ENCODE measurements at regions of chr20 and their contacts with region 1.

Region 1: GRCh38 chr20:3218307-3218988 is 9.2 kb downstream of the ITPA start:
- DNase-seq: peak; percentile 74
- ATAC-seq: peak; percentile 20
- H3K4me3 ChIP-seq: no peak overlapping the region
- H3K27ac ChIP-seq: no peak overlapping the region
- H3K4me1 ChIP-seq: peaks cover 29% of the 10 kb centered on the region
- H3K27me3 ChIP-seq: no peaks in the 10 kb centered on the region
- CTCF ChIP-seq: peak; percentile 99

Region 2: DNA sequence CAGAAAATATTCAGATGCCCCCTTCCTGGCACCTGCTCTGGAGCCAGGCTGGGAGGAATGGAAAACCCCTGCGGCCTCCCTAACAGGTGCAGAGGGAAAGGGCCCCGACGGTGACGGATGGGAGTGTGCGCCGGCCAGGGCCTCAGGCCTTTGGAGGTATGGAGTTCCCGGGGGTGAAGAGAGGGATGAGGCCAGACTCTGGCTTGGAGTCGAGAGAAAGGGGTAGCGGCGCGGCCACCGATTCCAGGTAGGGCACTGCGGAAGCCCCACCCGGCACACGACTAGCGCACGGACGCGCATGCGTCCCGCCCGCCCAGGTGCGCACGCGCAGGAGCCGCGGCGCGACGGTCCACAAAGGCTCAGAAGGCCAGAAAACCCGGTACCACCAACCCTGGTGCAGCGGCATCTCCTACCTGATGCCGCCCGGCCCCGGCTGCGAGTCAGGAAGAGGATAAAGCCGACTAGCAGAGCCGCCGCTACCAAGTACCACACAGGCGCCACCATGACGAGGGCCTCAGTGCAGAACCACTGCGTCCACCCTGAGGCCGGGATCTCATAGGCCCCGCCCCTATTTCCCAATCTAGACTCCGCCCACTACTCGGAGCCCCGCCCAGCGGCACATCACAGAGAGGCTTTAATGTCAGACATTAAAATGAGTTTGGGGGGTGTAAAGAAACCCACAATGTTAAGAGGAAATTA is 14.2 kb before region 1 on chr20 and contains the start of gene DDRGK1:
- CTCF ChIA-PET with region 1: interaction called, 4 read pairs
- POLR2A ChIA-PET with region 1: interaction called, 12 read pairs
- intact Hi-C with region 1: no loop called
- DNase-seq: peak; percentile 91
- ATAC-seq: peak; percentile 82
- H3K4me3 ChIP-seq: peak within 1 kb of the TSS; percentile 84
- H3K27ac ChIP-seq: peak within 1 kb of the TSS; percentile 60
- H3K4me1 ChIP-seq: peaks cover 14% of the 10 kb centered on the region
- H3K27me3 ChIP-seq: no peaks in the 10 kb centered on the region
- CTCF ChIP-seq: no peak
- total RNA-seq, gene DDRGK1: 97.7 and 122 TPM in 2 replicates

Region 3: DNA sequence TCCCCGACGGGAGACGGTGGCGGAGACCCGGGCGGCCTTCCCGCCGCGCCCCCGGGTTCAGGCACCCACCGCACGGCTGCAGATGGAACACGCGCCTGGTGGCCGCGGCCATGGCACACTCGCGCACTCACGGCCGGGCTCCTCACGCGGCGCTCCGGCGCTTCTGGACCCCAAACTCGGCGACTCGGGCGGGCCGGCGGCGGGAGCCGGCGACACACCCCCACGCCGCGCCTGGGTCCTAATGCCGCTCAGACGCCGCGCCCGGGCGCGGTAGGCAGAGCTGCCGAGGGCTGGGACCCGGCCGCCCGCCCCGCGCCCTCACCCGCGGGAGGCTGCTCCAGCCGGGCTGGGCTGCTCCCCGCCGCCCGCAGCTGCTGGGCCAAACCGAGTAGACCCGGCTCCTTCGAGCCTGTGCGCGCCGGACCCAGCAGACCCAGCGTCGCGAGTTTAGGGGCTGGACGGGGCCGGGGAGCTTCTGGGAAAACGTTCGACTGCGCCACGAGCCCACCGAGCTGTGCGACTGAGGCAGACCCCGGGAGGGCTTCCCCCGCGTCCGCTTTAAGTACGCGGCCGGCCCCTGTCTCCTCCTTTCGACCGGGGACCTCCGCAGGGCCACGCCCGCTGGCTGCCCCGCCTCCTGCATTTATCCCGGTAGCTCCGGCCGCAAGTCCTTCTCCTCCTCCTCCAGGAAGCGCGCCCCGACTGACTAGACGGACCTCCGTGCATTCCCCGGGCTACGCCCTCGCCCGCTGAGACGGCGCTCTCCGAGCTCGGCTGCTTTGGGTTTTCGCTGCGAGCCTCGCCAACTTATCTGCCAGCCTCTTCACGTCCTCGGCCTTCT is 20.8 kb after region 1 on chr20 and contains the start of gene SLC4A11:
- CTCF ChIA-PET with region 1: interaction called, 5 read pairs
- POLR2A ChIA-PET with region 1: interaction called, 18 read pairs
- intact Hi-C with region 1: no loop called
- DNase-seq: peak; percentile 72
- ATAC-seq: peak; percentile 65
- H3K4me3 ChIP-seq: peak within 1 kb of the TSS; percentile 92
- H3K27ac ChIP-seq: no peak within 1 kb of the TSS
- H3K4me1 ChIP-seq: peaks cover 39% of the 10 kb centered on the region
- H3K27me3 ChIP-seq: no peaks in the 10 kb centered on the region
- CTCF ChIP-seq: no peak
- total RNA-seq, gene SLC4A11: 23.7 and 26.8 TPM in 2 replicates

Region 4: DNA sequence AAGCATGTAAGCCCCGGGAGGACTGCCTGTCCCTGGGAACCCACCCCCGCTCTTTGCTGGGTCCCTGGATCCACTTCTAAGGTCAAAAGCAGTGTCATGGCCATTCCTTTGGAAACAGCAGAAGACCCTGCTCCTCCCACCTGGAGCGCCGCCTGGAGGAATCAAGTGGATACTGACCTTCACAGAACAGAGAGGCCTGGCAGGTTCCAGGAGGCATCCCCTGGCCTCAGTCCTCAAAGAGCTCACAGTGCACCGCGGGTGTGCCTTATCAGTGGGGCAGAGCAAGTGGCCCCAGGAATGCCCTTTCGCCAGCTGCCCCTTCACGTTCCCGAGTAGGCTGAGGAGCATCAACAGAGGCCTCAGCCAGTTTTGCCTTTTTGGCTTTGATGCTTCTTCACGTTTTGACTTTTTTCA is 31.6 kb after region 1 on chr20:
- CTCF ChIA-PET with region 1: interaction called, 3 read pairs
- POLR2A ChIA-PET with region 1: no interaction called
- intact Hi-C with region 1: loop called (anchors 1 kb)
- DNase-seq: peak; percentile 62
- ATAC-seq: peak; percentile 52
- H3K4me3 ChIP-seq: no peak overlapping the region
- H3K27ac ChIP-seq: no peak overlapping the region
- H3K4me1 ChIP-seq: no peaks in the 10 kb centered on the region
- H3K27me3 ChIP-seq: no peaks in the 10 kb centered on the region
- CTCF ChIP-seq: peak; percentile 76

Region 5: DNA sequence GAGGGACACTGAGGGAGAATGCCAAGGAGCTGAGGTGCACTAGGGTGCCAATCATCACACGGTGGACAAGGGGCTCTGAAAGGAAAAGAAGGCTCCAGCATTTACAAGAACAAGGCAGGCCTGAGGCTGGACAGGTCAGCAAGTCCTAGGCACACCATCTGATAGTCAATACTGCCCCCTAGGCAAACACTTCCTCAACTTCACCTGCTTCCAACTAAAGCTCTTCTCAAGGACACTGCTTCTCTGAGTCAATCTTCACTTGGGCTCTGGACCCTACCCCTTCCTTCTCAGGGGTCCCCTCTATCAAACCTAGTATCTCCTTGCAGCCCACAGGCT is 58.2 kb after region 1 on chr20:
- CTCF ChIA-PET with region 1: interaction called, 8 read pairs
- POLR2A ChIA-PET with region 1: no interaction called
- intact Hi-C with region 1: loop called (anchors 2 kb)
- DNase-seq: peak; percentile 65
- ATAC-seq: peak; percentile 90
- H3K4me3 ChIP-seq: no peak overlapping the region
- H3K27ac ChIP-seq: no peak overlapping the region
- H3K4me1 ChIP-seq: no peaks in the 10 kb centered on the region
- H3K27me3 ChIP-seq: no peaks in the 10 kb centered on the region
- CTCF ChIP-seq: peak; percentile 72

Region 6: DNA sequence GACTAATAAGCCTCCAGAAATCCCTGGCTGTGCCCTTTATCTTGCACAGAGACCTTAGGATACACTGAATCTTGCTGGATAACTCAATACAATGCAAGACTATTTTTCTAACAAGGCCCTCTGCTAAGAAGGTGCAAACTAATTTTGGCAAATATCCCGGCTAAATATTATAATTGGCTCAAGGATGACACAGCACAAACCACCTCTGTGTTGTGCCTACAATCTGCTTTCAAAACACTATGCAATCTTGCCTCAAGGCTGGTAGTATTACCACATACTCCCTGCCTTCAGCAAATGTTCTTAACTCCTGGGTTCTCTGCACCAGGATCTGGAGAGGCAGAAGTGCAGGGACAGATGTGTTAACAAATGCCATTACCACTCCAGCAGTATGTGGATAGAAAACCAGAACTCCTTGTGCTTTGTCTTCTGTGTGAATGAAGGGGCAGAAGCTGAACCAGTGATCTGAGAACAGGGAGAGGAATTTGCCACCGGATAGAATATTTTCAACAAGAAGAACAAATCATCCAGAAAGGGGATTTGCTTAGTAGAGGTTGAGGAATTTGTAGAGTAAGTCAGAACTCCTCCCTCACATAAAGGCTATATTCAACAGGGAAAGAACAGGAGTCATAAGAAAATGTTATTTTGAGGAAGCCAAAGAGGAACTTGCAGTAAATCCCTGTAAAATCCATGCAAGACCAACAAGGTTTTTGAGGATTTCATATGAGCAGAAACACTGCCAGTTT is 94.7 kb after region 1 on chr20:
- CTCF ChIA-PET with region 1: interaction called, 10 read pairs
- POLR2A ChIA-PET with region 1: interaction called, 9 read pairs
- intact Hi-C with region 1: loop called (anchors 1 kb)
- DNase-seq: peak; percentile 9
- ATAC-seq: peak; percentile 37; the same call in 1 of the 2 replicates
- H3K4me3 ChIP-seq: no peak overlapping the region
- H3K27ac ChIP-seq: no peak overlapping the region
- H3K4me1 ChIP-seq: peaks cover 13% of the 10 kb centered on the region
- H3K27me3 ChIP-seq: no peaks in the 10 kb centered on the region
- CTCF ChIP-seq: no peak

Region 7: DNA sequence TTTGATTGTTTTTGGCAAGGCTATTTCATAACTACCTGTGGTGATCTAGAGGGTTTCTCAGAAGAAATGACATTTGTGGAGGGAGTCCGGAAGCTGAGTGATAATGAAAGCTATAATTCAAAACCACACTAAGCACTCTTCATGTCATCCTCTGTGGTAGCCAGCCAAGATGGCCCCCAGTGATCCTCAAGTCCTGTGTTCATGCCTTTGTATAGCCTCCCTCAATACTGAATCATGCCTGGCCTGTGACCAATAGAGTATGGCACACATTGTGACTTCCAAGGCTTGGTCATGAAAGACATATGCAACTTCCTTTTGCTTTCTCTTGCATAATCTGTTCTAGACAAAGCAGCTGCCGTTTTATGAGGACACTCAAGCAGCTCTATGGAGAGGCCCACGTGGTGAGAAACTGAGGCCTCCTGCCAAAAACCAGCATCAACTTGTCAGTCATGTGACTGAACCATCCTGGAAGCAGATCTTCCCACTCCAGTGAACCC is 201.8 kb after region 1 on chr20:
- CTCF ChIA-PET with region 1: no interaction called
- POLR2A ChIA-PET with region 1: no interaction called
- intact Hi-C with region 1: no loop called
- DNase-seq: peak; percentile 23
- ATAC-seq: no peak
- H3K4me3 ChIP-seq: no peak overlapping the region
- H3K27ac ChIP-seq: no peak overlapping the region
- H3K4me1 ChIP-seq: no peaks in the 10 kb centered on the region
- H3K27me3 ChIP-seq: no peaks in the 10 kb centered on the region
- CTCF ChIP-seq: no peak